ENCODE measurements at regions of chr7 and their contacts with region 1.

Region 1: DNA sequence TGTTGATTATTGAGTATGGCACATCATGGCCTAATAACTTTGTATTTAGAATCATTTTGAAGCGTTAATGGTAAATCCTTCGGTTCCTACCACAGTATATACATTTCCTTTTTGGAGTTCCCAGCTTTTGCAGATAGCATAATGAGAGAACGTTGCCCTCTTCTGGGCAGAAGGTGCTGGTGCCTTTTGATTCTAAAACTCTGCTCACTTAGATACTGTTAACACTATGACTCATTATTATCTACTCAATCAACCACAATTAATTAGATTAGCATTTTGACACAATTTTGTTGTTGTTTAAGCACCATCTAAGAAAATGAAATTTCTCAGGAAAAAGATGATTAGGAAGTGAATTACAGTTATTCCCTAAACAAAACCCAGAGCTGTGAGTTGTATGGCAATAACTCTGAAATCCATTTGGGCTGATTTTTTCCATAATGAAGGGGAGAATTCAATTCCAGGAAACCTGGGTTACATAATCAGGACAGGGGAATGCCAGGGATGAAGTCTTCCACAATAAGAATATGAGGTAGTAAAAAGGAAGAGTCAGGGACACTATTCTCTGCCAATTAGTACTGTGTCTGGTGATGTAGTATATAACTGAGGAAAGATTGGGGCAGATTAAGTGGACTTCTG is 11.5 kb upstream of the DLD start:
- DNase-seq: no peak
- H3K4me3 ChIP-seq: no peak overlapping the region
- H3K27ac ChIP-seq: no peak overlapping the region
- H3K4me1 ChIP-seq: no peaks in the 10 kb centered on the region
- H3K27me3 ChIP-seq: no peaks in the 10 kb centered on the region
- CTCF ChIP-seq: peak; percentile 62 to 73 (median 64)
- EP300 ChIP-seq: no peak
- POLR2A ChIP-seq: no peak

Region 2: DNA sequence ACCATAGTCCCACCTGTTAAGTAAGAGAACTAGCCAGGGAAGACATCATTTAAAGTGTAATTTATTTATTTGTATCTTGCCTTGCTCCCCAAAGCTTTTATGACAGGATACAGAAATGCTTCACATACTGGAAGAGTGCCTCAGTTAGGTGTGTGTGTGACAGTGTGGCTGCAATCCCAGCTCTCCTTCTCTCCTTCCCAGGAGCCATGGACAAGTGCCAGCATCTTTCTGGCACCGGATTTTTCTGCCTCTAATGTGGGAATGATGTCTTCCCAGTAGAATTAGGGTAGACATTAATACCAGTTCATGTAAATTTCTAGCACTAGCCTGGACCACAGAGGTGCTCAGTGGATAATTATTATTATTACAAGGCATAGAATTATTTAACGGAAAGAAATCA is 1972.8 kb before region 1 on chr7:
- intact Hi-C with region 1: no loop called
- DNase-seq: peak; percentile 28 to 53 (median 37)
- H3K4me3 ChIP-seq: no peak overlapping the region
- H3K27ac ChIP-seq: no peak overlapping the region
- H3K4me1 ChIP-seq: no peaks in the 10 kb centered on the region
- H3K27me3 ChIP-seq: no peaks in the 10 kb centered on the region
- CTCF ChIP-seq: no peak
- EP300 ChIP-seq: no peak
- POLR2A ChIP-seq: no peak

Region 3: GRCh38 chr7:107286751-107287621 is 592.5 kb before region 1 on chr7:
- intact Hi-C with region 1: no loop called
- DNase-seq: no peak
- H3K4me3 ChIP-seq: no peak overlapping the region
- H3K27ac ChIP-seq: peak overlapping the region in 1 of 2 donors; percentile 24
- H3K4me1 ChIP-seq: peaks cover 2% of the 10 kb centered on the region
- H3K27me3 ChIP-seq: no peaks in the 10 kb centered on the region
- CTCF ChIP-seq: no peak
- EP300 ChIP-seq: no peak
- POLR2A ChIP-seq: no peak

Region 4: DNA sequence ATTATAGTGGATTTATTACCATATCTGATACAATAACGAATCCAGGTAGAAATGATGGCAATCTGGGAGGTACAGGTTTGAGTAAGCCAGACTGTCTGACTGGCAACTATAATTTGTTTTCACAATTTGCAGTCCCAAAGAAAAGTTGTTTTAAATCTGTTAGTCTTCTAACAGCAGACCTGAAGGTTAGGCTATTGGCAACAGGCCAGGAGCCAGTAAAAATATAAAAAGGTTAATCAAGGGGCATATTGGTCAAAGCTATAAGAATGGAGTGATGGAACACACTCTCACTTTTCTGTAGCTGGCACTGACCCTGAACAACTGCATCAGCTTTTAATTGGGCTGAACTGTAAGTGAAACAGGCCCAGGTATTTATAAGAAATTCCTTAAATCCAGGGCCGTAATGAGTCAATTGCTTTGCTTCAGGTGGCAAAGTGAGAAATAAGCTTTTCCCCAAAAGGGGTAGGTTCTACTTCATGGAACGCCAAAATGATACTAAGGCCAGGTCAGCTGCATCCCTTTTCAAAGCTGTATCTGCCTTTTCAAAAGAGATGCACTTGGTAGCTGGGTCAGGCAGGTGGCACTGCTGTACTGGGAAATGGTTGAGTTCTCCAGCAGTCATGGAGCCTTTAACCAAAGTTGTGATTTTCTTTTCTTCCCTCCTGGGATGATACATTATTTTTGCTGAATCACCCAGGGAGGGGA is 416.6 kb before region 1 on chr7:
- intact Hi-C with region 1: loop called in 2 of 4 experiments (anchors 2 to 5 kb)
- DNase-seq: peak; percentile 50 to 75 (median 64)
- H3K4me3 ChIP-seq: no peak overlapping the region
- H3K27ac ChIP-seq: no peak overlapping the region
- H3K4me1 ChIP-seq: no peaks in the 10 kb centered on the region
- H3K27me3 ChIP-seq: no peaks in the 10 kb centered on the region
- CTCF ChIP-seq: peak; percentile 28 to 79 (median 70)
- EP300 ChIP-seq: no peak
- POLR2A ChIP-seq: no peak

Region 5: DNA sequence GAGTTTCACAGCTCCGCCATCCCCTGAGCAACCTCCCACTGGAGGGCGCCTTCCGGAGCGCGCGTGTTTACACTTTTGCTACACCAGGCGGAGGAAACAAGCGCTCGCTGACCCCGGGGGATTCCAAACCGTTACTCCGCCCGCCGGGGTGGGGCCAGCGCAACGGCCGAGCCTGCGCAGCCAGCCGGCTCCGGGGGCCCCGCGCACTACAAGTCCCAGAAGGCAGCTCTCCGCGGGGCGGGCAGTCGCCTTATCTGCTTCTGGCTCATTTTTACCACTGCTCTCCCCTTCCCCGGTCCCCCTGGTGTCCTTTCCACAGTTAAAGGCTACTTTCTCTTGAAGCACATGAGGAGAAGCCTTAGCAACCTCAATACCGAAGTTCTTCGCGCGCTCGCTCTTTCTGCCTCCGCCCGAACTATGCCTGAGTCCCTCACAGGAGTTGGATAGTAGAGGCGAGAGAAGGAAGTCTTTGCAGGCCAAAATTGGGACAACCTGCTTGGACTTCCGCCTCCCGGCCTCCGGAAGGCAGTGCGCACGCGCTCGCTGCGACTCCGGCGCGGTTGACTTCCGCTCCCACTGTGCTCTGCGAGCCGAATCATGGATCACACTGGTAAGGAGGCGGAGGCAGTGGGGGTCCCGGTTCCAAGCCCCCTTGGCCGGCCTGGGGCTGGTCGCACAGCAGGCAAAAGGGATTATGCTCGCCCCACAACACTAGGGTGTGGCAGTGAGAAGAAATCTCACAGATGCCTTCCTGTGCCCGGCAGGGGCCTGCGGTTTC is 135.8 kb before region 1 on chr7 and contains the start of gene CBLL1:
- intact Hi-C with region 1: loop called in 1 of 4 experiments (anchors 5 kb)
- DNase-seq: peak; percentile 95 to 99 (median 97)
- H3K4me3 ChIP-seq: peak within 1 kb of the TSS; percentile 95
- H3K27ac ChIP-seq: peak within 1 kb of the TSS; percentile 82 to 96
- H3K4me1 ChIP-seq: peaks cover 7% of the 10 kb centered on the region
- H3K27me3 ChIP-seq: no peaks in the 10 kb centered on the region
- CTCF ChIP-seq: peak; percentile 71 to 92 (median 90)
- EP300 ChIP-seq: no peak
- POLR2A ChIP-seq: peak; percentile 73
- total RNA-seq, gene CBLL1: 18.4 to 36.4 (median 25.6) TPM

Region 6: DNA sequence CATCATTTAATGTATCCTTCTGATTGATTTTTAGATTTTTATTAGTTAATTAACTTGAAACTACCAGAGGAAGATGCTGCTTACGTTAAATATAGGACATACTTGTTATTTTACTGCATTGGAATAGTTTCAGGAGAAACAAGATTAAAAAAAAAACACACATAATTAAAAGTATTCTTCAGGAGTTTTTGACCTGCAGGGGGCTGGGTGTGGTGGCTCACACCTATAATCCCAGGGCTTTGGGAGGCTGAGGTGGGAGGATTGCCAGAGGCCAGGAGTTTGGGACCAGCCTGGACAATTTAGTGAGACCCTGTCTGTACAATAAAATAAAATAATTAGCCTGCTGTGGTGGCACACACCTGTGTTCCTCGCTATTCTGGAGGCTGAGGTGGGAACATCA is 124.9 kb before region 1 on chr7:
- intact Hi-C with region 1: loop called in 1 of 4 experiments (anchors 5 kb)
- DNase-seq: no peak
- H3K4me3 ChIP-seq: no peak overlapping the region
- H3K27ac ChIP-seq: no peak overlapping the region
- H3K4me1 ChIP-seq: no peaks in the 10 kb centered on the region
- H3K27me3 ChIP-seq: no peaks in the 10 kb centered on the region
- CTCF ChIP-seq: no peak
- EP300 ChIP-seq: no peak
- POLR2A ChIP-seq: no peak

Region 7: DNA sequence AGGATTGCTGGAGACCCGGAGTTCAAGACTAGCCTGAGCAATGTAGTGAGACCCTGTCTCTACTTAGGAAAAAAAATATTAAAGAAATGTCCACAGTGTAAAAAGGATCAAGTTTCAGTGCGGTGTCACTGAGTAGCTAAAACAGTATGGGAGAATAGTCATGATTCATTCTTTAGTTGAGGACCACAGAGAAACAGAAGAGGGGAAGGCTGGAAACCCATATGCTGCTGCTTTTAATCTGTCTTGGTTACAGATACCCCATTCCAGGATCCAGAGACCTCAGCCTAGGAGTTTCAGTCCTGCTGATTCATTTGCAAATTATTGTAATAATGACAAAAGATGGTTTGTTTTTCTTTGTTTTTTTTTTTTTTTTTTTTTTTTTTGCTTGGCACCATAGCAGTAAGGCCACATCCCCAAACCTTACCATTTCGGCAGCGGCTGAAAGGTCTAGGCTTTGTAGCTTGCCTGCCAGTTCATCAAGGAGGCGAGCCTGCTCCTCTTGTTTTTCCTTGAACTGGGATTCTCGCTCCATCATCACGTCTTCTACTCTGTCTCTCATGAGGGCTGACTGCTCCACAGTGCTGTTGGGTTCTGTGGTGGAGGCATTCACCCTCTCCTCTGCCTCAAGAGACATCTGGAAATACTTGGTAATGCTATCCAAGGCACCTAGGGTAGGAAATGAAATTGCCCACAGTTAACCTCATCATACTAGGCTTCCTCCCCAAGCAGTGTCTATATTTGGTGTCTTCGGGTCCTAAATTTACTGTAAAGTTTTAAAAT is 55.7 kb after region 1 on chr7:
- intact Hi-C with region 1: no loop called
- DNase-seq: no peak
- H3K4me3 ChIP-seq: no peak overlapping the region
- H3K27ac ChIP-seq: no peak overlapping the region
- H3K4me1 ChIP-seq: peaks cover 14% of the 10 kb centered on the region
- H3K27me3 ChIP-seq: no peaks in the 10 kb centered on the region
- CTCF ChIP-seq: no peak
- EP300 ChIP-seq: no peak
- POLR2A ChIP-seq: no peak

Region 8: GRCh38 chr7:108063520-108063933 is 184.0 kb after region 1 on chr7:
- intact Hi-C with region 1: no loop called
- DNase-seq: no peak
- H3K4me3 ChIP-seq: no peak overlapping the region
- H3K27ac ChIP-seq: no peak overlapping the region
- H3K4me1 ChIP-seq: peaks cover 4% of the 10 kb centered on the region
- H3K27me3 ChIP-seq: no peaks in the 10 kb centered on the region
- CTCF ChIP-seq: no peak
- EP300 ChIP-seq: no peak
- POLR2A ChIP-seq: no peak

Region 9: GRCh38 chr7:108146070-108146837 is 266.7 kb after region 1 on chr7:
- intact Hi-C with region 1: loop called in 2 of 4 experiments (anchors 10 kb)
- DNase-seq: peak; percentile 40 to 73 (median 48)
- H3K4me3 ChIP-seq: no peak overlapping the region
- H3K27ac ChIP-seq: no peak overlapping the region
- H3K4me1 ChIP-seq: no peaks in the 10 kb centered on the region
- H3K27me3 ChIP-seq: no peaks in the 10 kb centered on the region
- CTCF ChIP-seq: peak; percentile 60 to 84 (median 81)
- EP300 ChIP-seq: no peak
- POLR2A ChIP-seq: no peak